CD8-positive, alpha-beta T cell (primary cell): ENCODE measurements at regions of chr16 and their contacts with region 1.

Region 1: GRCh38 chr16:16021988-16022682 is 72.7 kb downstream of the ABCC1 start:
- DNase-seq: no peak
- ATAC-seq: no peak
- H3K4me3 ChIP-seq: no peak overlapping the region
- H3K4me3 Mint-ChIP-seq: no peak overlapping the region
- H3K27ac ChIP-seq: no peak overlapping the region
- H3K27ac Mint-ChIP-seq: no peak overlapping the region
- H3K4me1 ChIP-seq: peaks cover 10% of the 10 kb centered on the region
- H3K4me1 Mint-ChIP-seq: peaks cover 21% of the 10 kb centered on the region
- H3K27me3 ChIP-seq: no peaks in the 10 kb centered on the region
- H3K27me3 Mint-ChIP-seq: no peaks in the 10 kb centered on the region
- CTCF ChIP-seq: no peak

Region 2: GRCh38 chr16:16063683-16064082 is 41.5 kb after region 1 on chr16:
- CTCF ChIA-PET with region 1: no interaction called
- POLR2A ChIA-PET with region 1: no interaction called
- intact Hi-C with region 1: loop called in 1 of 2 experiments (anchors 1 kb)
- DNase-seq: no peak
- ATAC-seq: no peak
- H3K4me3 ChIP-seq: no peak overlapping the region
- H3K4me3 Mint-ChIP-seq: no peak overlapping the region
- H3K27ac ChIP-seq: no peak overlapping the region
- H3K27ac Mint-ChIP-seq: no peak overlapping the region
- H3K4me1 ChIP-seq: peaks cover 15% of the 10 kb centered on the region
- H3K4me1 Mint-ChIP-seq: peaks cover 19% of the 10 kb centered on the region
- H3K27me3 ChIP-seq: no peaks in the 10 kb centered on the region
- H3K27me3 Mint-ChIP-seq: no peaks in the 10 kb centered on the region
- CTCF ChIP-seq: no peak